Endothelial cell of umbilical vein (primary cell): ENCODE measurements at regions of chr22 and their contacts with region 1.

Region 1: GRCh38 chr22:30104501-30105156 is 24.4 kb downstream of the HORMAD2 start:
- DNase-seq: no peak
- H3K4me3 ChIP-seq: no peak overlapping the region
- H3K27ac ChIP-seq: no peak overlapping the region
- H3K4me1 ChIP-seq: no peaks in the 10 kb centered on the region
- H3K27me3 ChIP-seq: peaks cover 10 to 44% of the 10 kb centered on the region in 2 experiments
- CTCF ChIP-seq: no peak
- POLR2A ChIP-seq: no peak

Region 2: GRCh38 chr22:30047364-30047738 is 57.3 kb before region 1 on chr22:
- CTCF ChIA-PET with region 1: no interaction called
- POLR2A ChIA-PET with region 1: no interaction called
- dilution Hi-C with region 1: no loop called
- intact Hi-C with region 1: no loop called
- DNase-seq: no peak
- H3K4me3 ChIP-seq: no peak overlapping the region
- H3K27ac ChIP-seq: no peak overlapping the region
- H3K4me1 ChIP-seq: peaks cover 19% of the 10 kb centered on the region
- H3K27me3 ChIP-seq: no peaks in the 10 kb centered on the region
- CTCF ChIP-seq: no peak
- POLR2A ChIP-seq: no peak

Region 3: DNA sequence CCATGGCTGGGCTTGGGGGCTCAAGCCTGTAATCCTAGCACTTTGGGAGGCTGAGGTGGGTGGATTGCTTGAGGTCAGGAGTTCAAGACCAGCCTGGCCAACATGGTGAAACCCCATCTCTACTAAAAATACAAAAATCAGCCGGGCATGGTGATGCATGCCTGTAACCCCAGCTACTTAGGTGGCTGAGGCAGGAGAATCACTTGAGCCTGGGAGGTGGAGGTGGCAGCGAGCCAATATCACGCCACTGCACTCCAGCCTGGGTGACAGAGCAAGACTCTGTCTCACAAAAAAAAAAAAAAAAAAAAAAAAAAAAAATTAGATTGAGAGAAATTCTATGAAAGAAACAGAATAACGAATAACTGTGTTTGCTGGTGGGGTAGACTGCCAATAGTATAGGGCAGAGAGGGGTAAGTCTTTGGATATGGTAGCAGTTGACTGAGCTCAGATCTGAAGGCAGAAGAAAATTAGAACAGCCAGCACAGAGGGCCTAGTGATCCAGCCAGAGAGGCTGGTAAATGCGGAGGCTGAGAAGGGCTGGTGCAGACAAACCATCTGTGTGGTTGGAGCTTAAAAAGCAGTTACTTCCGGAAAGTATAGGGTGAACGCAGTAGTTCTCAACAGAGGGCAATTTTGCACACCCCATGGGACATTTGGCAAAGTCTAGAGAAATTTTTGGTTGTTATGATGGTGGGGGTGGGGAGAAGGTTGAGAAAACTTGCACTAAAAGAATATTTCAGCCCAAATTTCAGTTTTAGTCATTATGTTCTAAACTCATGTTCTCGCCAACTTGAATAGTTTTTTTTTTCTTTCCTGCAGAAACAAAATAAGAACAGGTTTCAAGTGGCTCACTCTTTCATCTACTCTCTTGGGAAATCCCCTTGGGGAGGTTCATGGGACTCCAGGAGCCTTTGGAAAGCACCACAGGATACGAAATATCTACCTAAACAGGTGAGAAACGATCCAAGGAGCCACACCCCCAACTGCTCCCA is 26.0 kb before region 1 on chr22:
- CTCF ChIA-PET with region 1: no interaction called
- POLR2A ChIA-PET with region 1: no interaction called
- dilution Hi-C with region 1: no loop called
- intact Hi-C with region 1: no loop called
- DNase-seq: no peak
- H3K4me3 ChIP-seq: no peak overlapping the region
- H3K27ac ChIP-seq: no peak overlapping the region
- H3K4me1 ChIP-seq: no peaks in the 10 kb centered on the region
- H3K27me3 ChIP-seq: peaks cover 19 to 25% of the 10 kb centered on the region in 2 experiments
- CTCF ChIP-seq: no peak
- POLR2A ChIP-seq: no peak

Region 4: DNA sequence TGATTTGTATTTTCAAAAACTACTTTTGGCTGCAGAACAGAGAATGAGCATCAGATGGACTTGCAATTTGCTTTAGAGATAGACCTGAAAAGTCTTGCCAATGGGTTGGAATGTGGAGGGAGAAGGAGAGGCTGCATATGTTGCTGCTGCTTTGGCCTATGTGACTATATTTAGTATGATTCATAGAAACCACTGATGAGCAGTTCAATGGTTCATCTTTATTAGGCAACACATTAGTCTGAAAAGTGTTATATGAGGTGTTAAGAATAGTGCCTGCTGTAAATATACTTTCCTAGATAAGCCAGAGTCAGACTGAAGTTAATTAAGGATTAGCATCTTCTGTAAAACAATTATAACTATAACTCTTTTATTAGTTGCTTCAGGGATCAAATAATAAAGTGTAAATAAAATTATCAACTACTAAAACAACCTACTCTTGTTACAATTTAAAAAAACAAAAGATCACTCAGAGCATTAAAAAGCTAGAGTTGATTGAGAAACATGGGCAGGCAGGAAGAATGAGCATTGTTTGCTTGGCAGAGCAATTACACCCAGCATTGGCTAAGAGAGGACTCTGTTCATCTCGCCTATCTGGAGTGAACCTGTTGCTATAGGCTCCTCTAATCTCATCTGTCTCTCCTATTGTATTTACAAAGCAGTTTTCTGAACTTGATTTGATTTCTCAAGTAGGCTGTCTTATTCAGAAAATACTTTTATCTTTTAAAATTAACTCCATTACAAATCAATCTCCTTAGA is 11.9 kb after region 1 on chr22:
- CTCF ChIA-PET with region 1: interaction called, 10 read pairs
- POLR2A ChIA-PET with region 1: no interaction called
- dilution Hi-C with region 1: no loop called
- intact Hi-C with region 1: no loop called
- DNase-seq: no peak
- H3K4me3 ChIP-seq: no peak overlapping the region
- H3K27ac ChIP-seq: no peak overlapping the region
- H3K4me1 ChIP-seq: no peaks in the 10 kb centered on the region
- H3K27me3 ChIP-seq: peaks cover 19 to 20% of the 10 kb centered on the region in 2 experiments
- CTCF ChIP-seq: no peak
- POLR2A ChIP-seq: no peak